A673 (cell line): ENCODE measurements at regions of chr5 and their contacts with region 1.

Region 1: GRCh38 chr5:141691867-141692532 is 10.0 kb upstream of the ARAP3 start:
- DNase-seq: peak; percentile 86
- H3K4me3 ChIP-seq: peak overlapping the region; percentile 44
- H3K27ac ChIP-seq: no peak overlapping the region
- H3K4me1 ChIP-seq: peaks cover 28% of the 10 kb centered on the region
- H3K27me3 ChIP-seq: no peaks in the 10 kb centered on the region
- CTCF ChIP-seq: peak; percentile 96

Region 2: DNA sequence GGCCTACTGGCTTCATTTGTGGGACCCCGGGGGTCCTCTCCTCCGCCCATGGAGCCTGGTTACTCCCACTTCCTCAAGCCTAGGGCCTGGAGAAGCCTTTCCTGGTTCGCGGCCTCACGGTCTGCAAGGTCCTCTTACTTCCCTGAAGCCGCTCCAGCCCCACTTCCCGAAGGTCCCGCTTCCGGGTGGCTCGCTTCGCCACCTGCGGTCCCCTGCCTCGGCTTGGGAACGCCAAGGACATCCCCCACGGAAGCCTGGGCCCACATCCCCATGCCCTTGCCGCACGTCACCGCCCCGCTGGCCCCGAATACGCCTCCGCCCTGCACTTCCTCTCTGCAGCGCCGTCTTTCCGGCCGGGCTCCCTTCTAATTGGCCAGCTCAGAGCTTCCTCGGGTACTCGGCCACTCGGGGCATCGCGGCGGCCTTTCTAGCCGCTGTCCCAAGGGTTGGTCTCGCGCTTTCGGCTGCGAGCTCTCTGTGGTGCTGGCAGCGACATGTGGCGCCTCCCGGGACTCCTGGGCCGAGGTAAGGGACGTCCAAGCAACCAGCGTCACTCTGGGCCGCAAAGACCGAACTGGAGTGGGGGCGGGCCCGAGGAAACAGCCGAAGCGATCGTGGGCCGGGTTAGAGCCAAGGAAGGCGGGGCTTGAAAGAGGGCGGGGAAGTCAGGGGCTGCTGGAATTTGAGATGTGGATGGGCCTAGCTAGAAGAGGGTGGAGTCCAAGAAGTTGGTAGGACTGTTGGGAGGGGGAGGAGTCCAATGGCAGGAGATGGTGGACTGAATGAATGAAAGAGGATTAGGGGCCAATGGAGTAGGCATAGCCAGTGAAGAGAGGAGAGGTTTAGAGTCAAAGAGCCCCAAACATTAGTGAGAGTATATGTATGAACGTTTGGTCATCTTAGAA is 231.7 kb after region 1 on chr5 and contains the start of gene DELE1:
- CTCF ChIA-PET with region 1: no interaction called
- POLR2A ChIA-PET with region 1: no interaction called
- intact Hi-C with region 1: no loop called
- DNase-seq: peak; percentile 98
- H3K4me3 ChIP-seq: peak within 1 kb of the TSS; percentile 78
- H3K27ac ChIP-seq: peak within 1 kb of the TSS; percentile 97
- H3K4me1 ChIP-seq: peaks cover 10% of the 10 kb centered on the region
- H3K27me3 ChIP-seq: no peaks in the 10 kb centered on the region
- CTCF ChIP-seq: no peak
- total RNA-seq, gene DELE1: 35.1 and 40.1 TPM in 2 replicates

Region 3: DNA sequence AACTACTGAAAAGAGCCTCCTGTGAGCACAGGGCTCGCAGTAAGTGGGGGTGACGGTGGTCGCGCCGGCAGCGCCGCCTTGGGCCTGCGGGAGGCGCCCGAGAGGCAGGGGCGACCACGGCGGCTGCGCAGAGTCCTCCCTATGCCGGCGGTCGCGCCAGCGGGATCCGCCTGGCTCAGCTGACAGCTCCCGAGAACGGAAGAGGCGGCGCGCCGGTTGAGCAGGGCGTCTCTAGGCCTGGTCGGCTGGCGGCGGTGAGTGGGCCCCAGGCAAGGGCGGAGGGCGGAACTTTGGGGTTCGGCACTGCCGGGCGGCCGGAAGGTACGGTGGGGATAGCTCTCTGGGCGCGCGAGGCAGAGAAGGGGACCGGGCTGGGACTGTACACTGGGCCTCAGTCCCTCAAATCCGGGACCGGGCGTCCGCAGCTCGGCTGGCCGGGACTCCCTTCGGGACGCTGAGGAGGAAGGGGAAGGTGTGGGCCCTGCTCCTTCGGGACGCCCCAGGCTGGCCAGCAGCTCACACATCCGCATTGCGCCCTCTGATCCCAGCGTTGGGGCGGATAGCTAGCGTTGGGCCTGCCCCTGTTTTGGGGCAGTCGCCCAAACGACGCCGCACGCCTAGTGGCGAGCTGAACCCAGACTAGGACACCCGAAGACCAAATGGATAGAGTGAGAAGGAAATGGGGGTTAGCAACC is 277.1 kb after region 1 on chr5 and contains the start of gene RNF14:
- CTCF ChIA-PET with region 1: interaction called, 6 read pairs
- POLR2A ChIA-PET with region 1: no interaction called
- intact Hi-C with region 1: loop called (anchors 2 kb)
- DNase-seq: peak; percentile 95
- H3K4me3 ChIP-seq: peak within 1 kb of the TSS; percentile 86
- H3K27ac ChIP-seq: peak within 1 kb of the TSS; percentile 87
- H3K4me1 ChIP-seq: peaks cover 13% of the 10 kb centered on the region
- H3K27me3 ChIP-seq: no peaks in the 10 kb centered on the region
- CTCF ChIP-seq: peak; percentile 94
- total RNA-seq, gene RNF14: 59.2 and 67.1 TPM in 2 replicates